CD4-positive, alpha-beta memory T cell (primary cell): ENCODE measurements at regions of chr2 and their contacts with region 1.

Region 1: DNA sequence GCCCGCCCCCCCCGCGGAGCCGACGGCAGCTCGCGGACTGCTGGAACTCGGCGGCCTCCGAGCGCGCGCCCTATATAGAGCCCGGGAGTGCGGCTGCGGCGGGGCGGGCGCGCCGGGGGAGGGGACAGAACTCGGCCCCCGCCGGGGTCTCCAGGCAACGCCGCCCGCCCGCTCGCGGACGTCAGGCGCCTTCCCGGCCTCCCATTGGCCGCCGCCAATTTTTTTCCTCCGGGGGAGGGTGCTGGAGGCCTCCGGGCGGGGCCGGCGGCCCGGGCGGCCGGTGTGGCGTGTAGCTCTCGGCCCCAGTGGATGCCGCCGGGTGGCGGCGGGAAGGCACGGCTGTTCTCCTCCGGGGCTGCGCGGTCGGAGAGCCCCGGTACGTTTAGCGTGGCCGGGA is at the start of gene ZFP36L2:
- DNase-seq: peak; percentile 92 to 99 (median 97)
- H3K4me3 ChIP-seq: peak within 1 kb of the TSS; percentile 76 to 88
- H3K4me3 Mint-ChIP-seq: peak within 1 kb of the TSS; percentile 91 to 99 (median 96)
- H3K27ac ChIP-seq: peak within 1 kb of the TSS; percentile 90
- H3K27ac Mint-ChIP-seq: peak within 1 kb of the TSS; percentile 92 to 98 (median 95)
- H3K4me1 ChIP-seq: peaks cover 26% of the 10 kb centered on the region
- H3K4me1 Mint-ChIP-seq: peaks cover 18 to 46% (median 26%) of the 10 kb centered on the region in 4 donors
- H3K27me3 ChIP-seq: no peaks in the 10 kb centered on the region
- H3K27me3 Mint-ChIP-seq: peaks cover 0 to 2% of the 10 kb centered on the region in 2 donors
- total RNA-seq, gene ZFP36L2: 456 to 464 TPM

Region 2: DNA sequence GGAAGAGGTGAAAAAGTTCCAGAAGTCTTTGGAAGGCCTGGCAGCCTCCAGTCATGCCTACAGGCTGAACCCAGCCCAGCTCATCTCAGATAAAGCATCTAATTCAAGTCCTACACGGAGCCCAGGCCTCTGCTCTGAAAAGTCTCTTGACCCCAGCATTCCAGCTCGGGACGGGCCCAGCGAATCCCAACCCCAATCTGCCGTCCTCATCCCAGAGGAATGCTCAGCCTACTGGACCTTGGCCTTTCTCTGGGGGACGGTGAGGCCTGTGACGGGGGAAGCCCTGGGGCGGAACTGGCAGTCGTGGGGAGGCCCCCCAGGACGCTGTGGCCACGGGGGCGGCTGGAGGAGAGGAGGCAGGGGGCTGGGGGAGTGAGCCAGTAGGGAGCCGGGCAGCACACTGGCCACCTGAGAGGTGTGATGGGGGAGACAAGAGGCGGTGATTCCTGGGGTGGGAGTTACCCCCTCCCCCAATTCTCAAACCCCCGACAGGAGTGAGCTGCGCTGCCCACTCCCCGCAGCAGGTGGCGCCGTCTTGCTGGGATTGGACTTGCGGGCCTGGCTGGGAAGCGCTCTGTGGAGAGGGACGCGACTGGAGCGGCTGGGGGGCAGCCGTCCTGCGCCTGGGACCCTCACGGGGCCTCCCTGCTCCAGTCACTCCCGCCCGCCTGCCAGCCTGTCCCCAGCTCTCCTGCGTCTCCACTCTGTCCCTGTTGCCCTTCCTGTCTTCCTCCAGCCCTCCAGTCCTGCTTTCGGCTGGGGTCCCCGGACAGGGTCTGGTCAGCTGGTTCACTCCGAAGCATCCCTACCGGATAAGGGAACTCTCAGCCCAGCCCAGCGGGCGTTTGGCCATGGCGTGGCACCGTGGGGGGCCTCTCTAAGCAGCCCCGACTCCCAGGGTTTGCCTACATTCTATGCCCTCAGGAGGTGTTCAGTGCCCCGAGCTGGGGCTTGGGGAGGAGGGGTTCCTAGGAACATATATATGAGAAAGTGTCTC is 251.5 kb before region 1 on chr2:
- CTCF ChIA-PET with region 1: interaction called, 42 read pairs
- POLR2A ChIA-PET with region 1: interaction called, 7 read pairs
- intact Hi-C with region 1: loop called (anchors 1 kb)
- DNase-seq: peak in 4 of 5 donors; percentile 25 to 43 (median 29)
- H3K4me3 ChIP-seq: no peak overlapping the region
- H3K4me3 Mint-ChIP-seq: no peak overlapping the region
- H3K27ac ChIP-seq: no peak overlapping the region
- H3K27ac Mint-ChIP-seq: peak overlapping the region in 1 of 7 donors; percentile 50
- H3K4me1 ChIP-seq: no peaks in the 10 kb centered on the region
- H3K4me1 Mint-ChIP-seq: peaks cover 0 to 5% (median 3%) of the 10 kb centered on the region in 4 donors
- H3K27me3 ChIP-seq: no peaks in the 10 kb centered on the region
- H3K27me3 Mint-ChIP-seq: no peaks in the 10 kb centered on the region

Region 3: GRCh38 chr2:43100883-43101662 is 125.5 kb before region 1 on chr2:
- CTCF ChIA-PET with region 1: no interaction called
- POLR2A ChIA-PET with region 1: no interaction called
- intact Hi-C with region 1: no loop called
- DNase-seq: no peak
- H3K4me3 ChIP-seq: no peak overlapping the region
- H3K4me3 Mint-ChIP-seq: no peak overlapping the region
- H3K27ac ChIP-seq: no peak overlapping the region
- H3K27ac Mint-ChIP-seq: no peak overlapping the region
- H3K4me1 ChIP-seq: no peaks in the 10 kb centered on the region
- H3K4me1 Mint-ChIP-seq: peaks cover 0 to 1% (median 0%) of the 10 kb centered on the region in 4 donors
- H3K27me3 ChIP-seq: no peaks in the 10 kb centered on the region
- H3K27me3 Mint-ChIP-seq: no peaks in the 10 kb centered on the region

Region 4: GRCh38 chr2:43123981-43124686 is 102.4 kb before region 1 on chr2:
- CTCF ChIA-PET with region 1: interaction called, 445 read pairs
- POLR2A ChIA-PET with region 1: interaction called, 6,960 read pairs
- intact Hi-C with region 1: loop called (anchors 1 kb)
- DNase-seq: no peak
- H3K4me3 ChIP-seq: no peak overlapping the region
- H3K4me3 Mint-ChIP-seq: no peak overlapping the region
- H3K27ac ChIP-seq: no peak overlapping the region
- H3K27ac Mint-ChIP-seq: peak overlapping the region in 3 of 7 donors; percentile 35 to 75 (median 74)
- H3K4me1 ChIP-seq: peaks cover 20% of the 10 kb centered on the region
- H3K4me1 Mint-ChIP-seq: peaks cover 19 to 28% (median 23%) of the 10 kb centered on the region in 4 donors
- H3K27me3 ChIP-seq: no peaks in the 10 kb centered on the region
- H3K27me3 Mint-ChIP-seq: no peaks in the 10 kb centered on the region

Region 5: DNA sequence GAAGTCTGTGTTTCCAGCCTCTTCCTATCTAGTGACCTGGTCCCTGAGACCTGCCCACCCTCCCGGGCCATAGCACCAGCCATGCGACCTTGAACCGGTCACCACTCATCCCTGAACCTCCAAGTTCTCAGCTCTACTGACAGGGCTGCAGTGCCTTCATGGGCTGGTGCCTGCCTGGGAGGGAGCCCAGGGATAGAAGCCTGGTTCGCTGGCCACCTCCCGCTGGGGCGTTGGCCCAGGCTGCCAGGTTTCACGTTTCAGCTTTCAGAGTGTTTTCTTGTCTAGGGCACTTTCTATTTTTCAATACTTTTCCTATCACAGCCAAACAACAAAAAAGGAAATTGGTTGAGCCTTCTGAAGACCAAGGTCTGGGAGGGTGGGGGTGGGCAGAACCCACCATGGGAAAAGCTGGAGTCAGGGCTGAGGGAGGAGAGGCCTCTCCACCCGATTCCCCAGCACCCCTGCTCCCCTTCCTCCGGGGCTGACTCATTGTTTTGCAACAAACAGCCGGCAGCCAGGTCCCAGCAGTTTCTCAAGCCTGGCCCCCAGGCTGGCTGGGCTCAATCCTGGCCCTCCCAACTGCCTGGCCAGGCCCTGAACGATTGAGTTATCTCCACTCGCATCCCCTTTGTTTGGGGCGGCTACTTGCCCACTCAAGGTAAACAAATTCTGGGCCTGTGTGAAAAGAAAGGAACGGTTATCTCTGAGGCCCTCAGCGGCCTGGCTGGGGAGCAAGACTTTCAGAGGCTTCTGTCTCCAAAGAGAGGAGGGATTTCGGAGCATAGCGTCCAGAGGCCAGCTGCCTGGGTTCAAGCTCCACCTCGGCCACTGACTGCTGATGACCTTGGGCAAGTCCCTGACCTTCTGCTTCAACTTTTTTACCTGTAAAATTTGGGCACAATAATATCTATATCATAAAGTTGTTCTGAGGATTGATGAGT is 47.7 kb before region 1 on chr2:
- CTCF ChIA-PET with region 1: interaction called, 319 read pairs
- POLR2A ChIA-PET with region 1: interaction called, 6,960 read pairs
- intact Hi-C with region 1: no loop called
- DNase-seq: peak in 1 of 5 donors; percentile 61
- H3K4me3 ChIP-seq: peak overlapping the region in 1 of 2 donors; percentile 7
- H3K4me3 Mint-ChIP-seq: peak overlapping the region in 7 of 8 donors; percentile 54 to 82 (median 72)
- H3K27ac ChIP-seq: peak overlapping the region; percentile 53
- H3K27ac Mint-ChIP-seq: peak overlapping the region; percentile 93 to 99 (median 98)
- H3K4me1 ChIP-seq: peaks cover 84% of the 10 kb centered on the region
- H3K4me1 Mint-ChIP-seq: peaks cover 58 to 80% (median 70%) of the 10 kb centered on the region in 4 donors
- H3K27me3 ChIP-seq: no peaks in the 10 kb centered on the region
- H3K27me3 Mint-ChIP-seq: no peaks in the 10 kb centered on the region

Region 6: GRCh38 chr2:43484323-43484930 is 257.9 kb after region 1 on chr2:
- CTCF ChIA-PET with region 1: interaction called, 58 read pairs
- POLR2A ChIA-PET with region 1: interaction called, 20 read pairs
- intact Hi-C with region 1: loop called (anchors 1 kb)
- DNase-seq: peak in 4 of 5 donors; percentile 46 to 54 (median 52)
- H3K4me3 ChIP-seq: no peak overlapping the region
- H3K4me3 Mint-ChIP-seq: no peak overlapping the region
- H3K27ac ChIP-seq: no peak overlapping the region
- H3K27ac Mint-ChIP-seq: peak overlapping the region in 1 of 7 donors; percentile 22
- H3K4me1 ChIP-seq: peaks cover 4% of the 10 kb centered on the region
- H3K4me1 Mint-ChIP-seq: peaks cover 0 to 7% (median 4%) of the 10 kb centered on the region in 4 donors
- H3K27me3 ChIP-seq: no peaks in the 10 kb centered on the region
- H3K27me3 Mint-ChIP-seq: no peaks in the 10 kb centered on the region

Region 7: DNA sequence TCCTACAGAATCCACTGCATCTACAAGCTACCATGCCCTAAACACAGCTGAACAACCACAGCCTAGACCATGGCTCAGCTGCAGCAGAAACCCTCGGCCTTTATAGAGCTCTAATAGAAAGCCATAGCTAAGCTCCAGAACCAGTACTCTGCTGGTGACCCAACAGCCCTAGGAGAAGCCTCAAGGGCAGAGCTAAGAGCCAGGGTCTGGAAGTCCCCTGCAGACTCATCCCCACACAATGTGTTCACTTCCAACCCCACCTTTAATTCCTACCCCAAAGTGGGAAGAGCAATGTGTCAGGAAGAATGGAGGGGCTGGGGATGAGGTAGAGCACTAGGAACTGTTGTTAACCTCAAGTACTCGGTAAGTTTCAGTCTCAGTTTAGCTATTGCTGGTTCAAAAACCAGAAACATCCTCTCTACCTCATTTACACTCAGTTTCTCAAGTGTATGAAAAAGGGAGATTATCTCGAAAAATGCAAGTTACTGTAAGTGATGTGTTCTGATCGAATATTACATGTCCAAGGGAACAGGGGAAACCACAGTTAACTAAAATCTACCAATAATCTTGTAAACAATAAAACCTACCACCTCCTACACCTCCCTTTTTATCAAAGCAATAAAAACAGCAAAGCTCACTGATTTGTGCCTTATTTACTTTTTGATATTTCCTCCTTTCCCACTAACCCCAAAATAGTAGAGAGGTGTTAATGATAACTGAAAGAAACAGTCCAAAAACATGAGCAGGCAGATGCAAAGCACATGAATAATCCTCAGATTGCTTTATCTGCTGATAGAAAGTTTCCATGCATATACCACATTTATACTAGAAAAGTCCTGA is 333.1 kb after region 1 on chr2:
- CTCF ChIA-PET with region 1: no interaction called
- POLR2A ChIA-PET with region 1: no interaction called
- intact Hi-C with region 1: no loop called
- DNase-seq: no peak
- H3K4me3 ChIP-seq: no peak overlapping the region
- H3K4me3 Mint-ChIP-seq: peak overlapping the region in 7 of 8 donors; percentile 45 to 77 (median 59)
- H3K27ac ChIP-seq: no peak overlapping the region
- H3K27ac Mint-ChIP-seq: peak overlapping the region; percentile 67 to 92 (median 82)
- H3K4me1 ChIP-seq: peaks cover 58% of the 10 kb centered on the region
- H3K4me1 Mint-ChIP-seq: peaks cover 30 to 46% (median 34%) of the 10 kb centered on the region in 4 donors
- H3K27me3 ChIP-seq: no peaks in the 10 kb centered on the region
- H3K27me3 Mint-ChIP-seq: no peaks in the 10 kb centered on the region

Region 8: GRCh38 chr2:43995733-43996533 is 769.4 kb after region 1 on chr2 and contains the start of gene LRPPRC:
- CTCF ChIA-PET with region 1: no interaction called
- POLR2A ChIA-PET with region 1: no interaction called
- intact Hi-C with region 1: loop called (anchors 5 kb)
- DNase-seq: peak; percentile 90 to 94 (median 94)
- H3K4me3 ChIP-seq: peak within 1 kb of the TSS; percentile 84 to 94
- H3K4me3 Mint-ChIP-seq: peak within 1 kb of the TSS; percentile 87 to 97 (median 94)
- H3K27ac ChIP-seq: peak within 1 kb of the TSS; percentile 79
- H3K27ac Mint-ChIP-seq: peak within 1 kb of the TSS; percentile 93 to 100 (median 97)
- H3K4me1 ChIP-seq: peaks cover 40% of the 10 kb centered on the region
- H3K4me1 Mint-ChIP-seq: peaks cover 33 to 58% (median 49%) of the 10 kb centered on the region in 4 donors
- H3K27me3 ChIP-seq: no peaks in the 10 kb centered on the region
- H3K27me3 Mint-ChIP-seq: peaks cover 0 to 2% of the 10 kb centered on the region in 2 donors
- total RNA-seq, gene LRPPRC: 61.5 to 65.3 TPM